Left cardiac atrium (tissue), 4 donors: ENCODE measurements at regions of chr1 and their contacts with region 1.

Region 1: GRCh38 chr1:218345673-218346390 is 696 bp downstream of the TGFB2 start:
- DNase-seq: peak; percentile 77
- ATAC-seq: peak; percentile 83 to 85

Region 2: GRCh38 chr1:218459878-218460711 is 114.3 kb after region 1 on chr1:
- intact Hi-C with region 1: loop called in 1 of 2 experiments (anchors 10 kb)
- DNase-seq: no peak
- ATAC-seq: peak; percentile 79 to 88

Region 3: GRCh38 chr1:218521375-218522169 is 175.7 kb after region 1 on chr1:
- intact Hi-C with region 1: loop called (anchors 5 to 10 kb)
- DNase-seq: peak; percentile 35
- ATAC-seq: peak; percentile 27 to 54

Region 4: GRCh38 chr1:219066631-219067349 is 721.0 kb after region 1 on chr1:
- intact Hi-C with region 1: loop called in 1 of 2 experiments (anchors 10 kb)
- DNase-seq: no peak
- ATAC-seq: peak; percentile 72 to 80

Region 5: DNA sequence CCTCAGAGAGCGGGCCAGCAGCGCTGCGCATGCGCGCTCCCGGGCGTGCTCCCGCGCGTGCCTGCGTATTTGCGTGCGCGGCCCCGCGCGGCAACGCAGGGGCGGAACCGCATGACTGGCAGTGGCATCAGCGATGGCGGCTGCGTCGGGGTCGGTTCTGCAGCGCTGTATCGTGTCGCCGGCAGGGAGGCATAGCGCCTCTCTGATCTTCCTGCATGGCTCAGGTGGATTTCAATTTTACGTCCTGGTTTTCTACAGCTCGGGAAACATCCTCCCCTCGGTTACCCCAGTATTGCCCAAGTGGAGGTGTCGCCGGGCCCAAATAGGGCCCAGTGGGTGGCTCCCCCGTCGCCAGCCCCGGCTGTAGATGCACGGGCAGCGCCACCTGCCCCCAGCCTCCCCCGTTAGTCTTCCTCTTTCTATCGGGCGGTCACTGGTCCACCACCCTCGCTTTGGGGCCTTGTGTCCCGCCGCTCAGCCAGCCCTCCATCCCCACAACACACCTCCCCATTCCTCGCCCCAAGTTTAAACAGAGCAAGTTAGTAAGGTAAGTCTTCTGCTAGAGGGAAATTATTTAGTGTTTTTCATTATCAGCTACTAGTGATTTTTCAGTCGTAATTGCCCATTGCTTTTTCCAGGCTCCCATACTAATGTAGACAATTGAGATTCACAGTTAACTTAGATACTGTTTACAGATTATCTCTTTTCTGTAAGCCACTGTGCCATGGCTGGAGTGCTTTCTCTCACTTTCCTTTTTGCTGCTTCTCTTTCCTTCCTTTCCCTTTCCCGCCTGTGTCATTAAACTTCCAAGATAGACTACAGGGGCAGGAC is 828.1 kb after region 1 on chr1 and contains the start of gene LYPLAL1:
- intact Hi-C with region 1: loop called in 1 of 2 experiments (anchors 10 kb)
- DNase-seq: peak; percentile 92
- ATAC-seq: peak; percentile 98
- total RNA-seq, gene LYPLAL1: 53.1 to 57.9 TPM